H1 (cell line): ENCODE measurements at regions of chr22 and their contacts with region 1.

Region 1: DNA sequence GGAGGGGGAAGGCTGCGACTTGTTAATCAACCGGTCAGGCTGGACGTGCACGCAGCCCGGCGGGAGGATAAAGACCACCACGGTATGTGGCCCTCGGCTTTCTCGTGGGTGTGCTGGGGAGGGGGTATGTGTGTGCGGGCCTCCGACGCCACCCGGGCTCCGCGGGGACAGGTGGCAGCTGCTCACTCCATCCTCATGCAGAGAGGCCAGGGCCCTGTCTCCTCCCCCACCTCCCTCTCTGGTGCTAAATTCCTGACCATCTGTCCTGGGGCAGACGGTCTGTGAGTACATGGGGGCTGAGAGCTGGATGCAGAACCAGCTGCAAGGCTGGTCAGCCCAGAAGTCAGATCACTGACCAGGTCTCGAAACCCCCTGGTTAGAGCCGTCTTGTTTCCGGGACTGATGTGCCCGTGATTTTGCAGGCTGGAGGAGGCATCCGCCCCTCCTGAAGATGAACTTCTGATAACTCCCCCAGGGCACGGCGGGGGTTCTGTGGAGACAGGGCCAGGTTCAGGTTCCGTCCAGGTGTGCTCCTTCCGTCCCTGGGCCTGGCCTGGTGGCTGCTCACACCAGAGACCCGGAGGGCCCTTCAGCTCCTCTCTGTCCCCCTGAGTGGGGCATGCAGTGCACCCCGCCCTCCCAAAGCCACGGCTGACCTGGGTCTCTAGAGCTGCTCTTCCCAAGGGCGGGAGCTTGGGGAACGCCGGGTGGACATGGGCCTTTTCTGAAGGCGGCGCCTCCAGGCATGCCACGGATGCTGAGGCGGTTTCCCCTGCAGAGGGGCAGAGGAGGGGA is 1119.7 kb downstream of the BRD1 start:
- DNase-seq: no peak
- H3K4me3 ChIP-seq: no peak overlapping the region
- H3K27ac ChIP-seq: no peak overlapping the region
- H3K4me1 ChIP-seq: peaks cover 0 to 2% (median 0%) of the 10 kb centered on the region in 4 experiments; a peak in 2 of 7 replicates
- H3K27me3 ChIP-seq: no peaks in the 10 kb centered on the region; a peak in 1 of 7 replicates
- CTCF ChIP-seq: no peak
- EP300 ChIP-seq: no peak
- POLR2A ChIP-seq: no peak
- RAD21 ChIP-seq: no peak

Region 2: GRCh38 chr22:48689206-48689605 is 18.8 kb before region 1 on chr22:
- CTCF ChIA-PET with region 1: no interaction called
- POLR2A ChIA-PET with region 1: no interaction called
- DNase-seq: no peak
- H3K4me3 ChIP-seq: no peak overlapping the region
- H3K27ac ChIP-seq: no peak overlapping the region
- H3K4me1 ChIP-seq: peaks cover 0 to 4% (median 1%) of the 10 kb centered on the region in 4 experiments; a peak in 3 of 7 replicates
- H3K27me3 ChIP-seq: no peaks in the 10 kb centered on the region
- CTCF ChIP-seq: no peak
- EP300 ChIP-seq: no peak
- POLR2A ChIP-seq: no peak
- RAD21 ChIP-seq: no peak

Region 3: DNA sequence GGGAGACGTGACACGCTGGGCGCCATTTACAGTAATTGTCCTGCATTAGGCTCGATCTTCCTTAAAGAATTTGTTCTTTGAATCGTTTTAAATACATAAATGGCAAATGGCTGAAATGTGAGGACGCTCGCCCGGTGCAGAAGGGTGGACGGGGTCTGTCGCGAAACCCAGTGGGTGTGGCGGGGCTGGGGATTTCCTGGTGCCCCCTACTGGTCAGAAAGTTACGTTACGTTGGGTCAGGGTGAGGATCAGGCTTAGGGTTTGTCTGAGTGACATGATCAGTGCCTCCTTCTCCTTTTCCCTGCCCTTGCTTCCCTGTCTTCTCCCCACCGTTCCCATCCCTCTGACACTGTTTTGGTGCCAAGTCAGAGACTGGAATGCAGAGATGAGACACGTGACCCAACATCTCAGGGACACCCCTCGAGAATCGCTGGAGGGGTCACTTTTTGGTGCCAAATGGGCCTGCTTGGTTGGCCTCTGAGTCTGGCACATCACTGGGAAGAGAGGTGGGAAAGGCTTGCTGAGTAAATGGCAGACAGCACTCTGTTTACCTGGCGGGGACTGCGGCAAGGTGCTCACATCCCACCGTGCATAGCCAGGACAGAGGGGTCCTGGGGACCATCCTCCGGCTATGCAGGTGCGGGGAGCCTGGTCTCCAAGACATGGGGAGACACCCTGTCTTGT is 12.2 kb after region 1 on chr22:
- CTCF ChIA-PET with region 1: interaction called, 11 read pairs
- POLR2A ChIA-PET with region 1: no interaction called
- DNase-seq: peak in 1 of 2 experiments; percentile 80
- H3K4me3 ChIP-seq: no peak overlapping the region
- H3K27ac ChIP-seq: no peak overlapping the region
- H3K4me1 ChIP-seq: peaks cover 0 to 12% (median 4%) of the 10 kb centered on the region in 4 experiments; a peak in 1 of 7 replicates
- H3K27me3 ChIP-seq: no peaks in the 10 kb centered on the region
- CTCF ChIP-seq: peak; percentile 54 to 80 (median 77)
- EP300 ChIP-seq: no peak
- POLR2A ChIP-seq: no peak
- RAD21 ChIP-seq: peak; percentile 46 to 54